PC-3 (cell line): ENCODE measurements at regions of chr17 and their contacts with region 1.

Region 1: DNA sequence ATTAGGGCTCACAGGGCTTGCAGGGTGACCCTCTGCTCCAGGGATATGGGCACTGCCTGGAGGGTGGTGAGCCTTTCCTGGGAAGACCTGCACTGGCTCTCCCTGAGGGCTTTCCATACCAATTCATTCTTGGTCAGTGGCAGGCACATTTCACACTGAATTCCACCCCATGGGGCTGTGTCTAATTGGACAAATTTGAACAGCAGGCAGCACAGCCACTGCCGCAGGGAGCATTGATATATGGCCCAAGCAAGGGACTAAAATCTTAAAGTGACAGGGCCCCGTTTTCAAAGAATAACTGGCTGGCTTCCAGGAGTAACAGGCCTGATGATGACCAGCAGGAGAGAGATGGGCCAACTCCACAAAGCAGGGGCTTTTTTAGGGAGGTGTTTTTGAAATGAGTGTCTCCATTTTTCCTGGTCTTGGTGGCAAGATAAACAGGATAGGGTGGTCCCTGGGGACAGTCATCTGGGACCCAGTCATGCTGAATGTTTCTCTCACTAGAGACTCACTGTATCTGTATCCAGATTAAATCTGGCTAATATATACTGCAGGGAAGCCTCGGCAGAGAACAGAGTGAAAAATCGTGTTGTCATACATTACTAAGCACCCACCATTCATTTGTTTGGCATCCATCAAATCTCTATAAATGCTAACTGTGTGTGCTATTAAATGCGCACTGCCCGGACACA is 74.1 kb upstream of the TBX2 start:
- DNase-seq: peak; percentile 82
- ATAC-seq: peak; percentile 89
- H3K4me3 ChIP-seq: no peak overlapping the region
- H3K27ac ChIP-seq: peak overlapping the region; percentile 71
- H3K4me1 ChIP-seq: peaks cover 26% of the 10 kb centered on the region
- H3K27me3 ChIP-seq: no peaks in the 10 kb centered on the region
- CTCF ChIP-seq: no peak

Region 2: DNA sequence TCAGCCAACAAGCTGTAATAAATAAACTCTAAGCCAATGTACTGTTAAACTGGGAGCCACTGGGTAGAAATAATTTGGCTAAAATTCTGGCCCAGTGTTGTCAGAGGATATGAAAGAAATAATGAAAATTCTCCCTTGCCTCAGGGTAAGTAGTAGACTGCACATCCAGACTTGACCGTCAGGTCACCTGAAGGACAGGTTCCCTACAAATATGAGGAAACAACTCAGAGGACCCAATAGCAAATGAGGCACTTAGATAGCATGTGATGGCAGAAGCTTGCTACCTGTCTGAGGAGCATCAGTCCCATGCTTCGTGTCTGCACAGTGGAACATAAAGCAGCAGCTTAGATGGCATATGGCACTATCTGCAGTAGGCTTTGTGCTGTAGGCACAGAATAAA is 145.2 kb before region 1 on chr17:
- CTCF ChIA-PET with region 1: no interaction called
- POLR2A ChIA-PET with region 1: interaction called, 10 read pairs
- intact Hi-C with region 1: no loop called
- DNase-seq: no peak
- ATAC-seq: no peak
- H3K4me3 ChIP-seq: no peak overlapping the region
- H3K27ac ChIP-seq: no peak overlapping the region
- H3K4me1 ChIP-seq: no peaks in the 10 kb centered on the region
- H3K27me3 ChIP-seq: no peaks in the 10 kb centered on the region
- CTCF ChIP-seq: no peak

Region 3: DNA sequence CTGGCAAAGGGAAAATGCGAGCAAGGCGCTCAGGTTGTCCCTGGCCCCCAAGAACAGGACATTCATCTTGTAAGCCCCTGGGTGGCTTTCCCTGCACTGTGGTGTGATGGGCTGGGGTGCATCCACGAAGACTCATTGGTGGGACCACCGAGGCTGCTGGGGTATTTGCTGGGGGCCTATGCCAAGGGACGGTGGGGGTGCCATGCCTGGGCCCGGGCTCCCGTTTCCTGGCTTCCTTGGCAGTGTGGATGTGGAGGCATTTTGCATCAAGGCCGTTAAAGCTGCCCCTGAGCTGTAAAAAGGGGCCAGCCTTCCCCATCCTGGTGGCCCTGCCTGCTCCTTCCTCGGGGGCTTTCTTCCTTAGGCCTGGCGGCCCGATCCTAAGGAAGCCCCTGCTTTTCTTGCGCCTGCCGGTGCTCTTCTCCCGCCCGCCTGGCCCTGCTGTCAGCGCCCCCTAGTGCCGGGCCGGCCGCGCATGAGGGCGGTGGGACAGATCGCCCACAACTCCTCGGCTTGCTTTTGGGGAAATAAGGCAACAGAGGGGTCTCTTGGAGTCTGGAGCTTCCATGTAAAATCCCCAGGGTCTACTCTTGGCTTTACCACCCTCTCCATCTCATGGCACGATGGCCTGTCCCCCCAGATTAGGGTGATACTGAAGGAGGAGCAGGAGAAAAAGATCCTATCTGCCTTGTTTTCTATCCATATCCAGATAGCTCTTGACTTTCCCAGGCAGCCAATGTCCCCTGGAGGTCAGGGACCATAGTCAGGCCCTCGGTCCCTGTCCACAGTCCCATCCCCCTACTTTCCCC is 64.3 kb after region 1 on chr17:
- CTCF ChIA-PET with region 1: no interaction called
- POLR2A ChIA-PET with region 1: interaction called, 12 read pairs
- intact Hi-C with region 1: no loop called
- DNase-seq: peak; percentile 69
- ATAC-seq: peak; percentile 78
- H3K4me3 ChIP-seq: no peak overlapping the region
- H3K27ac ChIP-seq: no peak overlapping the region
- H3K4me1 ChIP-seq: peaks cover 3% of the 10 kb centered on the region; the same call in 1 of the 2 replicates
- H3K27me3 ChIP-seq: no peaks in the 10 kb centered on the region
- CTCF ChIP-seq: peak; percentile 99